Head of caudate nucleus (tissue), 42 donors: ENCODE measurements at regions of chr11 and their contacts with region 1.

Region 1: GRCh38 chr11:65274735-65275682 is 13.2 kb downstream of the POLA2 start:
- DNase-seq: peak; percentile 39 to 95 (median 82)

Region 2: GRCh38 chr11:64894070-64894796 is 380.8 kb before region 1 on chr11:
- intact Hi-C with region 1: no loop called
- DNase-seq: peak; percentile 68 to 94 (median 84)

Region 3: DNA sequence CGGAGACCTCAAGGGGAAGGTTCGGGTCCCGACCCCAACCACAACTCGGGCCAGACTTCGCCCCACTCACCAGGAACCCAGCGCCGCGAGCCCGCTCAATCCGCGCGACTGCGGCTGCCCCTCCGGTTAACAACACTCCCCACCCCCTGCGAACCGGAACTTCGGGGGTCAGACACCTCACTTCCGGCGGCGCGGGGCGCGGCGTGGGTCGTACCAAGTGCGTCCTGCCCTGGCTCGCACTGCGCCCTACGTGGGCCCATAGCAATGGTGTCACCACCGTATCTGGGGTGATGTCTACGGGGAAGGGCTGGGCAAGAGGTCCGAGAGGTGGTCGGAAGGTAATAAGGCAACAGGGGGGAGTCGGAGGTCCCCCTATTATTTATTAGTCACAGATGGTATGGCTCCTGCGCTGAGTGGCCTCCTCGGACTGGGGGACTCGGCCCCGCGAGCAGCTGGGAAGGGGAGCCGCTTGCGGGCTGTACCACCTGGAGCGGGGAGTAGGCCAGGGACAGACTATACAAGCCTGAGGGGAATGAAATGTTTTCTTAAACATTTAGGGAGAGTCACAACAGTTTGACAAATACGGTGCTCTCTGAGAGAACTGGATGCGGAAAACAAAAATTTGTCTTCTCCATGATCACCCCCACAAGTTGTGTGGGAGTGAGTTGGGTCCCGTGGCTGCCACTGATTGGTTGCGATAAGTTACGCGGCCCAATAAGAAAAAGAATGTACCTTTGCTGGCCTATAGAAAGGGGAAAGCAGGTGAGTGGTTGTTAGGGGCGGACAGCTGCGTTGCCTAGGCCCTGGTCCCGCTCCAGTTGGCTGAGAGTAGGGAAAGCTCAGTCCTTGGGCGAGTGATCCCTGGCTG is 140.4 kb before region 1 on chr11 and contains the start of gene SYVN1:
- intact Hi-C with region 1: no loop called
- DNase-seq: peak; percentile 85 to 97 (median 94)

Region 4: DNA sequence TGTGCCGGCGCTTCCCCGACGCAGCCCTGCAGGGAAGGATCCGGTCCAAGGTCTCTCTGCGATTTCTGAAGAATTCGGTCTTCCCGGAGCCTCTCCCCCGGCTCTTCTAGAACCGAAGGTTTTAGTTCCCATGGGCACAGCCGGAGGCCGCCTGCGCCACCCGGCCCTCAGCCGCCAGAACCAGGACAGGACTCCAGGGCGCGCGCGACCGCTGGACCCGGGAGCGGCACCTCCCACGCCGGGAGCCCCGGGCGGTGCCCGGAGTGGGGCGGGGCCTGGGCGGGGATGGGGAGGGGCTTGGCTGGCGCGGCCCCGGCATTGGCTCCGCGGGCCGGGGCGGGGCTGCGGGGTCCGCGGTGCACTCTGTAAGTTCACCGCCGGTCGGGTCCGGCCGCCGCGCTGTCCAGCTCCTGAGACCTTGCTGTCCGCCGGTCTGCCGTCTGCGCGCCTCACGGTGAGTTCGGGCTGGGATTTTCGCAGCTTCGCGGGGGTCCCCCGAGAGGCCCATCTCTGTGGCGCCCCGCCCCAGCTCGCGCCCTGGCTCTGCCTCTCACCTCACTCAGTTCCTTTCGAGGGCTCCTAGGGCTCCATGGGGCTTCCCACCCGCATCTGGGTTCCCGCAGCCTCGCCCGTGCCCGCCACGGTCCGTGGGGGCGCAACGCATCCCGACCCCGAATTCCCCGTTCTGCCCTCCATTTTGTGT is 39.6 kb after region 1 on chr11 and contains the start of gene CDC42EP2:
- intact Hi-C with region 1: loop called (anchors 2 kb)
- DNase-seq: peak; percentile 75 to 96 (median 92)

Region 5: DNA sequence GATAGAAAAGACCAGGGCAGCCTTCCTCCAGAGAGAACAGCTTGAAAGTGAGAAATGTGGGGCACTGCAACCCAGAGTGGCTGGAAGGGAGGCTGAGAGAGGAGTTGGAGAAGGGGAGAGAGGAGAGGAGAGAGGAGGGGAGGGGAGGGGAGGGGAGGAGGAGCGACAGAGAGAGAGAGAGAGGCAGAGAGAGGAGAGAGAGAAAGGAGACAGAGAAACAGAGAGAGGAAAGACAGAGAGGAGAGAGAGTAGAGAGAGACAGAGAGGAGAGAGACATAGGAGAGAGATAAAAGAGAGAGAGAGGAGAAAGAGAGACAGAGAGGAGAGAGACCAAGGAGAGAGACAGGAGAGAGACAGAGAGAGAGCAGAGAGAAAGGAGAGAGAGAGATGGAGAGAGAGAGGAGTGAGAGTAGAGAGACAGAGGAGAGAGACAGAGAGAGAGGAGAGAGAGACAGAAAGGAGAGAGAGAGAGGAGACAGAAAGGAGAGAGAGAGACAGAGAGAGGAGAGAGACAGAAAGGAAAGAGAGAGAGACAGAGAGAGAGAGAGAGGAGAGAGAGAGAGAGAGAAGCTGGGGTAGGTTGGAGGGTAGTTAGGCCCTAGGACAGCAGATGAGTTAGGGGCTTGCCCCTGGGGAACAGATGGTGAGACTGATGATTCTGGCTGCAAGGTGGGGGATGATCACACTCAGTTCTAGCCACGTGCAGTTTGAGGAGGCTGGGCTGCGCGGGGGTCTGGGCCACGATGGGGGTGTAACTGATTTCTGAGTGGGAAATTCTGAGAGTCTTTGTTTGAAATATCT is 241.3 kb after region 1 on chr11:
- intact Hi-C with region 1: loop called (anchors 10 kb)
- DNase-seq: peak in 1 of 42 donors; percentile 17